Activated CD4-positive, alpha-beta memory T cell treated with anti-CD3 and anti-CD28 coated beads, Interleukin-2, amount 10 ng/mL, durations not matched to agents 7 days and 5 days (primary cell): ENCODE measurements at regions of chr12 and their contacts with region 1.

Region 1: GRCh38 chr12:81644503-81644902 is 114.6 kb downstream of the PPFIA2 start:
- DNase-seq: no peak
- H3K4me3 Mint-ChIP-seq: no peak overlapping the region
- H3K27ac Mint-ChIP-seq: no peak overlapping the region
- H3K4me1 Mint-ChIP-seq: no peaks in the 10 kb centered on the region
- H3K27me3 Mint-ChIP-seq: no peaks in the 10 kb centered on the region

Region 2: GRCh38 chr12:82358200-82359114 is 714.0 kb after region 1 on chr12 and contains the starts of genes CCDC59 and METTL25:
- CTCF ChIA-PET with region 1: interaction called, 13 read pairs
- POLR2A ChIA-PET with region 1: no interaction called
- DNase-seq: peak; percentile 97
- H3K4me3 Mint-ChIP-seq: peak within 1 kb of the TSS; percentile 100
- H3K27ac Mint-ChIP-seq: peak within 1 kb of the TSS; percentile 96
- H3K4me1 Mint-ChIP-seq: peaks cover 48% of the 10 kb centered on the region
- H3K27me3 Mint-ChIP-seq: no peaks in the 10 kb centered on the region
- total RNA-seq, gene CCDC59: 48.3 to 50.4 TPM
- total RNA-seq, gene METTL25: 7.0 to 8.9 TPM